Activated CD8-positive, alpha-beta memory T cell treated with anti-CD3 and anti-CD28 coated beads, Interleukin-2, amount 10 ng/mL, durations not matched to agents 7 days and 5 days (primary cell): ENCODE measurements at regions of chr3 and their contacts with region 1.

Region 1: DNA sequence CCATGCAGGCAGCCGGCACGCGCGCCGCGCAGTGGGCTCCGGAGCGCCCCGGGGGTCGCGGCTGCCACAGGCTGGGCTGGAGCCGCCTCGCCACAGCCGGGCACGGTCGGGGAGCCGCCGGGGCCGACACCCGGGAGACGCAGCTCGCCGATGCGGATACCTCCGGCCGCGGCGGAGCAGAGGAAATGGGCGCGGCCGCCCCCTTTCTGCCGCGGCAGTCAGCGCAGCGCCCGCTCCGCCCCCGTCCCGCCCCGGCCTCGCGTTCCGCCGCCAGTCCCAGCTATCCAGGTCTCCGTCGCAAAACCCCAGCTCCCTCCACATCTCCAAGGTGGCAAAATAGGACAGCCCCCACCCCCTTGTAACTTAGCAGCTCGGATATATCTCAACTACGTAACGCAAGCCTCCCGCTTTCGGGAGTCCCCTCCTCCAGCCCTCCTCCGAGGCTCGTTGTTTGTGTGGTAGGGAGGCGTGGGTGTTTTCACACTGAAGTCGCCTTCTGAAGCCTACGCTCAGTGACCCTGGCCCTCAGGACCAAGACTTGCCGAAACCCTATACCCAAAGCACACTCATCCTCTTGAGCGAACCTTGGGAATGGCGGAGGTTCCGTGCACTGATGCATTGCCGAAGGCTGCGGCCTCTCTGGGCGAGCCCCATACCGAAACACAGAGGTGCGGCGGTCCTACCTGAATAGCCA is at the start of gene SH3BP5:
- DNase-seq: peak; percentile 79
- ATAC-seq: peak; percentile 96
- H3K4me3 Mint-ChIP-seq: peak within 1 kb of the TSS; percentile 83
- H3K27ac Mint-ChIP-seq: peak within 1 kb of the TSS; percentile 77
- H3K4me1 Mint-ChIP-seq: peaks cover 50% of the 10 kb centered on the region
- H3K27me3 Mint-ChIP-seq: no peaks in the 10 kb centered on the region
- total RNA-seq, gene SH3BP5: 19.4 to 30.3 TPM

Region 2: GRCh38 chr3:15276028-15276724 is 56.4 kb before region 1 on chr3:
- CTCF ChIA-PET with region 1: interaction called, 108 read pairs
- DNase-seq: no peak
- ATAC-seq: no peak
- H3K4me3 Mint-ChIP-seq: no peak overlapping the region
- H3K27ac Mint-ChIP-seq: no peak overlapping the region
- H3K4me1 Mint-ChIP-seq: peaks cover 45% of the 10 kb centered on the region
- H3K27me3 Mint-ChIP-seq: no peaks in the 10 kb centered on the region

Region 3: DNA sequence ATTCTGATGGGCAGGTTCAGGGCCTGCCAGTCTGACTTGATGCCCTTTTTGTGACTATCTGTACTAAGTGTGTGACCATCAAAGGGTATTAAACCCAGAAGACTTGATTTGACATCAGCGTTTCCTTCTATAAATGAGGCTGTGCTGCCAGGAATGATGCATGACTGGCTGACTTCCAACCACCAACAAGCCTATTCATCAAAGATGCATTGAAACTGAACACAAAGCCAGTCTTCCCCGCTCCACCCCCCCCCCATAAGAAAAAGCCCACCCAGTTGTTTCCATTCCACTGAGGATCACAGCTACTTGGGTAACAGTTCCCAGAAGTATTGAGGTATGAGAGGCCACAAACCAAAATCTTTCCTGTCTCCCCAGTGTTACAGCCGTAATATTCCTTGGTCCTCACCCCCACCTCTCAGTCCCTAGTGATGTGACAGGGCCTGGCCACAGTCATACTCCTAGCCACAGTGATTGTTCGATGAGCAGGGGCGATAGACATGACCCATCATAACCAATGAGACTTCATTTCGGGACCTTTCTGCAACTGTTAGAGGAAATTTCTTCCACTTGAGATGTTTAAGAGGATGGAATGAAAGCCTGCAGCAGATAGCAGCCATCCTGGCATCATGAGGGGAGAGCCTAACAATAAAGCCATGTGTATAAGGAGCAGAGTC is 22.8 kb before region 1 on chr3:
- CTCF ChIA-PET with region 1: interaction called, 11 read pairs
- DNase-seq: peak; percentile 69
- ATAC-seq: peak; percentile 28
- H3K4me3 Mint-ChIP-seq: peak overlapping the region; percentile 54
- H3K27ac Mint-ChIP-seq: peak overlapping the region; percentile 92
- H3K4me1 Mint-ChIP-seq: peaks cover 67% of the 10 kb centered on the region
- H3K27me3 Mint-ChIP-seq: no peaks in the 10 kb centered on the region

Region 4: GRCh38 chr3:15345608-15346137 is 13.1 kb after region 1 on chr3:
- CTCF ChIA-PET with region 1: interaction called, 12 read pairs
- DNase-seq: no peak
- ATAC-seq: no peak
- H3K4me3 Mint-ChIP-seq: no peak overlapping the region
- H3K27ac Mint-ChIP-seq: no peak overlapping the region
- H3K4me1 Mint-ChIP-seq: peaks cover 29% of the 10 kb centered on the region
- H3K27me3 Mint-ChIP-seq: peaks cover 12% of the 10 kb centered on the region

Region 5: DNA sequence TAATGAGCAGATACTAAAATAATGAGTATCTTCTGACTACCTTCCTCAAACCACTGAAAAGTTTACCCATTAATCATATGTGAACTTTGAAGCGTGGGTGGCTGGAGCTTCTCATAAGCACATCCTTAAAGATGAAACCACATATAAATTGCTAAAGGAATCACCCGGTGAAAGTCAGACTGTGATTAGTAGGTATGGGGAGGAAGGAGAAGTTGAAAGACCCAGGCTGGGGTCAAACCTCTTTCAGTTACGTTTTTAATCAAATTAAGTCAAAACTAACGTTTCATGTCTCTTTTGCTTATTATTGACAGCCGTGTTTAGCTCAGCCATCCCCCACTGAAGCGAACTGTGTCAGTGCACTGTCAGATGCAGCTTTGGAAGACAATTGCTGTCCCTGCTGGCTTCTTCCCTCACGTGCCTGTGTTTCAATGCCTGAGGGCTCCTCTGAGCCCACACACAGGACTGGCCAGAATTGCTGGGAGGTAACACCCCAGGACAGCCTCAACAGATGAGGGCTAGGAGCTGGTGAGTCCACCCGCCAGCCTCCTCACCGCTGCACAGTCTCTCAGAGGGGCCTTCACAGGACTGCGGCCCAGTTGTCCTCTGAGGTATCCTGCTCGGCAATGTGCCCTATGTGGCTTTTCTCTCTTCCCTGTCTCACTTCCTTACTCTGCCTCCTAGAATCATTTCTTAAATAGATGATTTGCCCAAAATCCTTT is 29.1 kb after region 1 on chr3:
- CTCF ChIA-PET with region 1: interaction called, 17 read pairs
- DNase-seq: peak; percentile 72
- ATAC-seq: peak; percentile 69
- H3K4me3 Mint-ChIP-seq: peak overlapping the region; percentile 29
- H3K27ac Mint-ChIP-seq: peak overlapping the region; percentile 68
- H3K4me1 Mint-ChIP-seq: peaks cover 42% of the 10 kb centered on the region
- H3K27me3 Mint-ChIP-seq: no peaks in the 10 kb centered on the region